Sciatic nerve (tissue), 2 donors: ENCODE measurements at regions of chrX and their contacts with region 1.

Region 1: DNA sequence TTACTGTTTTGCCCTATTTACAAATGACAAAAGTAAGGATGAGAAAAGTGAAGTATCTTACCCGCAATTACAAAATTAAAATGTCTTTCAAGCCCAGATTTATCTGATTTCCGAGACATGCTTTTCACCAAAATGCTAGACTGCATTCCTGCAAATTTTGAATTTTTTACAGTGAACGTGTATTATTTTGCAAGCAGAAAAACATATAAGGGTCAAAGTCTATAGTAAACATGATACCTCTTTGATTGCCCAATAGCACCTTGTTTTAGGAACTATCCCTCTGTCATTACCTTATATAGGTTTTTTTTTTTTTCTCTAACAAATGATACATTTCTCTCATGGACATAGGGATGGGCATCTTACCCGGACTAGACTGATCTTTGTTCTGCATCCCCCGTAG is 134.2 kb upstream of the RAP2C start:
- DNase-seq: no peak
- ATAC-seq: no peak

Region 2: GRCh38 chrX:132071260-132071659 is 282.2 kb before region 1 on chrX:
- intact Hi-C with region 1: no loop called
- DNase-seq: no peak
- ATAC-seq: no peak

Region 3: GRCh38 chrX:132413459-132413858 is 60.0 kb after region 1 on chrX:
- intact Hi-C with region 1: loop called (anchors 2 kb)
- DNase-seq: no peak
- ATAC-seq: no peak

Region 4: GRCh38 chrX:132426695-132427281 is 73.4 kb after region 1 on chrX:
- intact Hi-C with region 1: no loop called
- DNase-seq: no peak
- ATAC-seq: no peak